Aorta (tissue), 5 donors: ENCODE measurements at regions of chr4 and their contacts with region 1.

Region 1: DNA sequence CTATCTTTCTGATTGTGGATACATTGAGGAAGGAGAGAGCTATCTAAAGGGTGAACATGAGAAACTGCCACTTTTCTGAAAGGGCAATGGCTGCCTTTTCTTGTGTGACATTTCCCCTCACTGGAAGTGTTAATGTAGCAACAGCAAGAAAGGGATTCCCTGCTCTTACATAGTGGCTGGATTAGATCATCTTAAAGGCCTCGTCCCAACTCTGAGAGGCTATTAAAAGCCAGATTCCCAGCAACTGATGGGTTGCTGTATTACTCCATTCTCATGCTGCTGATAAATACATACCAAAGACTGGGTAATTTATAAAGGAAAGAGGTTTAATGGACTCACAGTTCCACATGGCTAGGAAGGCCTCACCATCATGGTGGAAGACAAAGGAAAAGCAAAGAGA is 33.7 kb upstream of the ADH7 start:
- DNase-seq: no peak
- ATAC-seq: no peak
- H3K4me3 ChIP-seq: no peak overlapping the region
- H3K27ac ChIP-seq: no peak overlapping the region
- H3K4me1 ChIP-seq: no peaks in the 10 kb centered on the region
- H3K27me3 ChIP-seq: no peaks in the 10 kb centered on the region

Region 2: GRCh38 chr4:98467627-98468072 is 1001.2 kb before region 1 on chr4:
- intact Hi-C with region 1: loop called (anchors 5 to 10 kb)
- DNase-seq: peak in 1 of 2 donors; percentile 81
- ATAC-seq: peak; percentile 90
- H3K4me3 ChIP-seq: no peak overlapping the region
- H3K27ac ChIP-seq: no peak overlapping the region
- H3K4me1 ChIP-seq: no peaks in the 10 kb centered on the region
- H3K27me3 ChIP-seq: peaks cover 0 to 2% of the 10 kb centered on the region in 2 donors